ENCODE measurements at regions of chr5 and their contacts with region 1.

Region 1: DNA sequence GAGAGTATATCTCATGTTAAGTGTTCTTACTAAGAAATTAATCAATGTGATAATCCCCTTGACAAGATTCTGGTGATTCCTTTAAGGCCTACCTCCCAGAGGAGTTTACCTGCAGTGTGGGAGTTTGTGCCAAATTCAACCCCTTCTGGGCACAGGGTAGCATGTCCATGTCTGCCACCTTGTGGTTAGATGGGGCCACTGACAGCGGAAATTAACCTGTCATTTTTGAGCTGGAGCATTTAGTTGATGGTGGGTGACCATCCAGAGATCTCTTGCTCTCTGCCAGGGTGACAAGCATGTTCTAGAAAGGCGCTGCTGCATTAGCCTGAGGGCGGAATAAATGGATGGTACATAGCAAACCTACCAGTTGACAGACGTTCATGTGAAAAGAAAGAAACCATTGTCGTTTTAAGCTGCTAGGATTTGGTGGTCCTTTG is 132.2 kb downstream of the FBXO4 start:
- DNase-seq: peak in 1 of 2 donors; percentile 45
- ATAC-seq: peak; percentile 64

Region 2: DNA sequence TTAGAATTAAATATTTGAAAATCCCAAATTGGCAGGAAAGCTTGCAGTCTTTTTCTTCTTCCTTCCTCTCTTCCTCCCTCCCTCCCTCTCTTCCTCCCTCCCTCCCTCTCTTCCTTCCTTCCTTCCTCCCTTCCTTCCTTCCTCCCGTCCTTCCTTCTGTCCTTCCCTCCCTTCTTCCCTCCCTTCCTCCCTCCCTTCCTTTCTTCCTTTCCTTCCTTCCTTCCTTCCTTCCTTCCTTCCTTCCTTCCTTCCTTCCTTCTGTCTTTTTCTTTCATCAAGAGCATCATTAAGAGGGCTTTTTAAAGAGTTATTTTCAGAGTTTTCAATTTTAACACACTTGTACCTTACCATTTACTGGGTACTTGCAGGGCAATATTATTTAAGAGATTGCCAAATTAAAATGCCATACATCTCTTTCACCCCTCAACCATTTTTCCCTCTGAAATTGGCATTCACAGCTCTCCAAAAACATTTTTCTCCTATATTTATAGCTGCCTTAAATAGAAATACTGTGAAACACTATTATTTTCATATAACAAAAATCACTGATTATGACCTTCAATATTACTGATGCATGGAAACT is 744.7 kb before region 1 on chr5:
- intact Hi-C with region 1: no loop called
- DNase-seq: no peak
- ATAC-seq: no peak

Region 3: DNA sequence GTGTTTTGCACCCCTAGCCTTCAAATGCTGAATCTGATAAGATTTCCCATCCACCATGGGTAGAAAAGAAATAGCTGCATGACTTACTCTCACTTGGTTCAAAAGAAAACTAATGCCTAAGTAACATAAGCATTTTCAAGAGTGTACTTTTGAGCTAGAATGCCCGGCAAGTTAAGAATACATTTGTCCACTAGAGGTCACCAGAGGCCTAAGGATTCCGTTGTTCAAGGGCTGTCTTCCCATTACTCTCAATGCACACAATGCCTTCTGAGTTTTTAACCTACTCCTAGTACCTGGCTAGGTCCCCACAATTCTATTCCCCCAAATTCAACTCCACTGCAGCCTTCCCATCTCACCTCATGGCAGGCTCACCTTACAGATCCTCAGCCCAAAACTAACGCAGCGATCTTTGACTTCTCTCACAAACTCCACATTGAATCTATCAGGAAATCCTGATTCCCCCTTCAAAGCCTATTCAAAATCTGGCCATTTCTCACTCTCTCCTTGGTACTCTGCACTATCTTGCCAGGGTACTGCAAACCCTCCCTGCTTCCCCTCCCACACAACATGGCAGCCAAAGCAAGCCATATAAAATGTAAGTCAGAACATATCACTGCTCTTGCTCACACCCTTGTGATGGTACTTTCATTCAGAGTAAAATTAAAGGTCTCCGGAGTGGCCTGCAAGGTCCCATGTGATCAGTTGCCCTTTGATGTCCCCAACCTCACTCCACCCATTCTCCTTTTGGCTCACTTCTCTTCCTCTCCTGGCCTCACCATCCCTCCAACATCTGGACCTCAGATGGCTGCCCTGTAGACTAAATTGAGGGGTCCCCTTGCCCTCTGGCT is 200.4 kb before region 1 on chr5:
- intact Hi-C with region 1: loop called in 1 of 2 experiments (anchors 5 kb)
- DNase-seq: peak in 1 of 2 donors; percentile 31
- ATAC-seq: peak; percentile 84

Region 4: GRCh38 chr5:41980396-41980795 is 76.9 kb before region 1 on chr5:
- intact Hi-C with region 1: no loop called
- DNase-seq: no peak
- ATAC-seq: no peak